ENCODE measurements at regions of chr3 and their contacts with region 1.

Region 1: DNA sequence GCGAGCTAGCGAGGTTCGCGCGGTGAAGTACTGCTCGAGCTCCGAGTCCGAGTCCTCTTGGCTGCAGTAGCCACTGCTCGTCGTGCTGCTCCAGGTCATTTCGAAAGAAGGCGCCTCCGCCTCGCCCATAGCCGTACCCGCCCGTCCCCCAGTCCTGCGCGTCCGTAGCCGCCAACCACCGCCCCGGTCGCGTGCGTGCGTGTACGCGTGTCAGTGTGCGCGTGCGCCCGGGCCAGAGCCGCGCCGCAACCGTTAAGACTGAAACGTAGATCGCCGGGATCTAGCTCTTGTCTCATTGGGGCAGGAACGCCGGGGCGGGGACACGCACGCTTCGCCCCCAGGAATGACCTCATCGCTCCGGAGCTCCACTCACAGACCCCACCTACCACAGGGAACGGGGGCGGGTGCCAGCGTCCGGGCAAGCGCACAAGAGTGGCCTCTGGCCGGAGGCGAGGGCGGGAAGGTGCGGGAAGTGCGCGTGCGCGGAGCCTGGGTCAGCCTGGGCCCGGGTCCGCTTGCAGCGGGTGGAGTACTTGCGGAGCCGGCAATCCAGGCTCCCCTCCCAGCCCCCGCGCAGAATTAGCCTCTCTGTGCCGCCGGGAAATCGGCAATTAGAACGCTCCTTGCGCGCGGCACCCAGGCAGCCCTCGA is 3.3 kb downstream of the RASSF1 start:
- DNase-seq: peak; percentile 99
- ATAC-seq: peak; percentile 82
- H3K4me3 Mint-ChIP-seq: peak overlapping the region; percentile 83
- H3K27ac Mint-ChIP-seq: peak overlapping the region; percentile 91
- H3K4me1 Mint-ChIP-seq: peaks cover 50% of the 10 kb centered on the region
- H3K27me3 Mint-ChIP-seq: no peaks in the 10 kb centered on the region

Region 2: GRCh38 chr3:50245831-50246516 is 91.3 kb before region 1 on chr3:
- CTCF ChIA-PET with region 1: interaction called, 5 read pairs
- POLR2A ChIA-PET with region 1: interaction called, 5 read pairs
- intact Hi-C with region 1: loop called in 1 of 2 experiments (anchors 1 kb)
- DNase-seq: peak; percentile 98
- ATAC-seq: peak; percentile 76
- H3K4me3 Mint-ChIP-seq: peak overlapping the region; percentile 75
- H3K27ac Mint-ChIP-seq: peak overlapping the region; percentile 95
- H3K4me1 Mint-ChIP-seq: peaks cover 84% of the 10 kb centered on the region
- H3K27me3 Mint-ChIP-seq: no peaks in the 10 kb centered on the region

Region 3: GRCh38 chr3:50350527-50351322 is 13.4 kb after region 1 on chr3 and contains the starts of genes CYB561D2 and NPRL2:
- CTCF ChIA-PET with region 1: interaction called, 24 read pairs
- POLR2A ChIA-PET with region 1: interaction called, 20 read pairs
- intact Hi-C with region 1: loop called (anchors 1 to 2 kb)
- DNase-seq: peak; percentile 99
- ATAC-seq: peak; percentile 90
- H3K4me3 Mint-ChIP-seq: peak within 1 kb of the TSS; percentile 90
- H3K27ac Mint-ChIP-seq: peak within 1 kb of the TSS; percentile 97
- H3K4me1 Mint-ChIP-seq: peaks cover 55% of the 10 kb centered on the region
- H3K27me3 Mint-ChIP-seq: no peaks in the 10 kb centered on the region
- total RNA-seq, gene CYB561D2: 10.3 to 14.3 TPM
- total RNA-seq, gene NPRL2: 42.5 to 43.0 TPM

Region 4: DNA sequence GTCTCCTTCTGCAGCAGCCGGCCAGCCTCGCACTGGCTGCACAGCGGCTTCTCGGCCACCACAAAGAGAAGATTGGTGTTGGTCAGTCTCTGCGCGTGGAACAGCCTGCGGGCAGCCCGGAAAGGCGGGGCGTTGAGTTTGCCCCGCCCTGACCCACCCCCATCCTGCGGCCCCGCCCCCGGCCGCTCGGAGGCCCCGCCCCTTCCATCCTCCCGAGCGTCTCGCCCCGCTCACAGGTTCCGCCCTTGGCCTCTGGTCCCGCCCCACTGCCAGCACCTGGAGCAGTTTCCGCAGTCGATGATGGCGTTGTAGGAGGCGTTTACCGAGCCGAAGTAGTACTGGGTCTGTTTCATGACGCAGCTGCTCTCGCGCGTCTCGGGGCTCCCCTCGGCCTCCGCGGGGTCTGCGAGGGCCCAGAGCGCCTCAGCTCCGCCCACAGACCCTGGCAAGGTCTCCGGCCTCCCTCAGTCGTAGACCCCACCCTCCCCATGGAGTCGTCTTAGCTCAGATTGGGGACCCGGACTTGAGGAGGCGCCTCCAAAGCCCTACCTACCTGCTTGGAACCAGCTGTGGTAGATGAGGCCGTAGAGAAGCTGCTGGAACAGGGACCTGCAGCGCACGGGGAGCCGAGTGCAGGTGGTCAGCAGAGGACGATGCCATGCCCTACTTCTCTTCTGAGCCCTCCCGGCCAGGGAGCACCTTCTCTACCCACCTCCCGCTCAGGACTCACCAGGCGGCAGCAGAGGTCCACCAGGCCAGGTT is 27.9 kb after region 1 on chr3:
- CTCF ChIA-PET with region 1: interaction called, 5 read pairs
- POLR2A ChIA-PET with region 1: no interaction called
- intact Hi-C with region 1: loop called in 1 of 2 experiments (anchors 1 kb)
- DNase-seq: peak; percentile 98
- ATAC-seq: peak; percentile 99
- H3K4me3 Mint-ChIP-seq: peak overlapping the region; percentile 72
- H3K27ac Mint-ChIP-seq: peak overlapping the region; percentile 74
- H3K4me1 Mint-ChIP-seq: peaks cover 13% of the 10 kb centered on the region
- H3K27me3 Mint-ChIP-seq: no peaks in the 10 kb centered on the region